Dorsolateral prefrontal cortex (tissue), 120 donors: ENCODE measurements at regions of chr20 and their contacts with region 1.

Region 1: DNA sequence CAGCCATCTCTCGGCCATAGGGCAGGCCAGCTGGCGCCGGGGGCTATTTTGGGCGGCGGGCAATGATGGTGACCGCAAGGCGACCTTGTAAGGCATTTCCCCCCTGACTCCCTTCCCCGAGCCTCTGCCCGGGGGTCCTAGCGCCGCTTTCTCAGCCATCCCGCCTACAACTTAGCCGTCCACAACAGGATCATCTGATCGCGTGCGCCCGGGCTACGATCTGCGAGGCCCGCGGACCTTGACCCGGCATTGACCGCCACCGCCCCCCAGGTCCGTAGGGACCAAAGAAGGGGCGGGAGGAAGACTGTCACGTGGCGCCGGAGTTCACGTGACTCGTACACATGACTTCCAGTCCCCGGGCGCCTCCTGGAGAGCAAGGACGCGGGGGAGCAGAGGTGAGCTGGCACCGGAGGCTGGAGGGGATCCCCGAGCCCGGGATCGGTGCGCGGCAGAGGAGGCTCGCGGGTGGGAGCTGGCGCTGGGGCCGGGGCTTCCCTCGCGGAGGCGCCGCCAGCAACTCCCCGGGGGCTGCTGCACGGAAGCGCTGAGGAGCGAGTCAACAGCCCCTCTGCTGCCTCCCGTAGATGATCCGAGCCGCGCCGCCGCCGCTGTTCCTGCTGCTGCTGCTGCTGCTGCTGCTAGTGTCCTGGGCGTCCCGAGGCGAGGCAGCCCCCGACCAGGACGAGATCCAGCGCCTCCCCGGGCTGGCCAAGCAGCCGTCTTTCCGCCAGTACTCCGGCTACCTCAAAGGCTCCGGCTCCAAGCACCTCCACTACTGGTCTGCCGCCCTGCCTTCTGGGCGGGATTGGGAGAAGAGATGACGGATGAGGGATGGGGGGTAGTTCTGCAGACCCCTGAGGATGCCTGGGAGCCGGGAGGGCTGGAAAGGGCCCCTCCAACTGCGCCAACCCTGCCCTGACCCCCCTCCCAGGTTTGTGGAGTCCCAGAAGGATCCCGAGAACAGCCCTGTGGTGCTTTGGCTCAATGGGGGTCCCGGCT is at the starts of genes CTSA and NEURL2:
- DNase-seq: peak; percentile 91 to 96 (median 94)
- H3K4me3 ChIP-seq: peak within 1 kb of the TSS; percentile 71 to 100 (median 92)
- H3K27ac ChIP-seq: peak within 1 kb of the TSS; percentile 51 to 98 (median 91)
- H3K27me3 ChIP-seq: no peaks in the 10 kb centered on the region
- CTCF ChIP-seq: peak in 47 of 56 donors; percentile 8 to 66 (median 39)
- total RNA-seq, gene CTSA: 72.5 to 172 (median 116) TPM
- total RNA-seq, gene NEURL2: 3.3 to 19.6 (median 7.1) TPM

Region 2: DNA sequence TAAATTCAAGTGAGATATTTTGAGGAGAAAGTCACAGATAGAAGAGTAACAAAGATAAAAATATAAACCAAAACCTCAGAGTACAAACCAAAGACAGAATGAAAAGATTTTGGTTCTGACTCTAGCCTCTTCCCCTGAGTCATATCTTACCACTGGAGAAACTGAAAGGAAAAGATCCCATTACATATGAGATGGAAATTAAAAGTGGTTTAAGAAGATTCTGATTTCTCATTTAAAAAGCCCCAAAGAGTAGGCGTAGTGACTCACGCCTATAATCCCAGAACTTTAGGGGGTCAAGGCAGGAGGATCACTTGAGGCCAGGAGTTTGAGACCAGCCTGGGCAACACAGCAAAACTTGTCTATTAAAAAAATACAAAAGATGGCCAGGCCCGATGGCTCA is 138.5 kb before region 1 on chr20:
- intact Hi-C with region 1: no loop called
- DNase-seq: no peak
- H3K4me3 ChIP-seq: no peak overlapping the region
- H3K27ac ChIP-seq: no peak overlapping the region
- H3K27me3 ChIP-seq: no peaks in the 10 kb centered on the region
- CTCF ChIP-seq: no peak

Region 3: DNA sequence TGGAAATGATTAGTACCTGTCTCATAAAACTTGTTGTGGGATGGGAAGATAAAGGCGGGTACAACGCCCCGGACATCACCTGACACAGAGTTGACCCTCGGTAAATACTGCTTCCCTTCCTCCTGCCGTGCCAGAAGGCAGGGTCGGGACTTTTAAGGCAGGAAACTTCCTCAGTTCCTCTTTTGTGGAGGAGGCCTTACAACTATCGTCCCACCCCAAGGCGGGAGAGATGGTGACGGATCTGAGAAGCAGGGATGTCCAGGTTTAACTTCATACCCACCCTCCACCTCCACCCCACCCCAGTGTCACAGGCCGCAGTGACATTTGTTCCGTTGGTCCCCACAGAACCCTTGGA is 99.0 kb before region 1 on chr20:
- intact Hi-C with region 1: loop called in 1 of 2 experiments (anchors 5 kb)
- DNase-seq: peak in 1 of 10 donors; percentile 4
- H3K4me3 ChIP-seq: peak overlapping the region; percentile 77 to 100 (median 96)
- H3K27ac ChIP-seq: peak overlapping the region in 53 of 59 donors; percentile 33 to 95 (median 86)
- H3K27me3 ChIP-seq: no peaks in the 10 kb centered on the region
- CTCF ChIP-seq: no peak

Region 4: DNA sequence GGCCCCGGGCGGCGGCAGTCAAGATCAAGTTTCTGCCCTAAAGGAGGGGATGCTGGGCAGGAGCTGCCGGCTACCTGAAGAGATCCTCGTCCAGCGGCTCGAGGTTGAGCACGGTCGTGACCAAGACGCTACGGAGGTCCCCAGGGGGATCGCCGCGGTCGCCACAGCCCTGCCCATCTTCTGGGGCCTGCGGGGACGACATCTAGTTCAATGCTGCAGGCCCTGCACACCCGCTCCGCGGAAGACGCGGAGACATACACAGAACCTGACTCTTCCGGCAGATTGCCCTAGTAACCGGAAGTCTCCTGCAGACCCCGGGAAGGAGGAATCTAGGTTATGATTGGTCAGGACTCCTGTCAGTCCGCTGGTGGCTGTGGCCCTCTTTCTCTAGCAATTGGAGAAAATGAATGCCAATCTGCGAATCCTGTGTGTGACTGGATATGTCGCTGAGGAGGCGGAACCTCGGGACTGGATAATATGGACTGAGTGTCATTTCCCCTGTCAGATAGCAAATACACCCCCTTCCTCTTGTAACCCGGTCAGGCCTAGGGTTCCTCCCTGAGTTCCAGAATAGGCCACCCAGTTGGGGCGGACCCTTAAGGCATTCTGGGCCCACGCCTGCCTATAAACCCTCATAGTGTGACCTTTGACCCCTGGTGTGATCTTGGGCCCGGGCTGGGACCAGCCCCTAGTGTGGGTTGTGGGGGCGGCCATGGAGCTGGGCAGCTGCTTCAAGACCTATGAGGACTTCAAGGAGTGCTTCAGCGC is 34.0 kb before region 1 on chr20 and contains the starts of genes ACOT8 and ZSWIM3:
- intact Hi-C with region 1: loop called in 1 of 2 experiments (anchors 5 kb)
- DNase-seq: peak; percentile 75 to 98 (median 95)
- H3K4me3 ChIP-seq: peak within 1 kb of the TSS; percentile 68 to 100 (median 93)
- H3K27ac ChIP-seq: peak within 1 kb of the TSS in 58 of 59 donors; percentile 42 to 96 (median 85)
- H3K27me3 ChIP-seq: no peaks in the 10 kb centered on the region
- CTCF ChIP-seq: peak in 8 of 56 donors; percentile 5 to 35 (median 18)
- total RNA-seq, gene ACOT8: 27.3 to 54.9 (median 41.6) TPM
- total RNA-seq, gene ZSWIM3: 2.8 to 9.6 (median 6.0) TPM

Region 5: DNA sequence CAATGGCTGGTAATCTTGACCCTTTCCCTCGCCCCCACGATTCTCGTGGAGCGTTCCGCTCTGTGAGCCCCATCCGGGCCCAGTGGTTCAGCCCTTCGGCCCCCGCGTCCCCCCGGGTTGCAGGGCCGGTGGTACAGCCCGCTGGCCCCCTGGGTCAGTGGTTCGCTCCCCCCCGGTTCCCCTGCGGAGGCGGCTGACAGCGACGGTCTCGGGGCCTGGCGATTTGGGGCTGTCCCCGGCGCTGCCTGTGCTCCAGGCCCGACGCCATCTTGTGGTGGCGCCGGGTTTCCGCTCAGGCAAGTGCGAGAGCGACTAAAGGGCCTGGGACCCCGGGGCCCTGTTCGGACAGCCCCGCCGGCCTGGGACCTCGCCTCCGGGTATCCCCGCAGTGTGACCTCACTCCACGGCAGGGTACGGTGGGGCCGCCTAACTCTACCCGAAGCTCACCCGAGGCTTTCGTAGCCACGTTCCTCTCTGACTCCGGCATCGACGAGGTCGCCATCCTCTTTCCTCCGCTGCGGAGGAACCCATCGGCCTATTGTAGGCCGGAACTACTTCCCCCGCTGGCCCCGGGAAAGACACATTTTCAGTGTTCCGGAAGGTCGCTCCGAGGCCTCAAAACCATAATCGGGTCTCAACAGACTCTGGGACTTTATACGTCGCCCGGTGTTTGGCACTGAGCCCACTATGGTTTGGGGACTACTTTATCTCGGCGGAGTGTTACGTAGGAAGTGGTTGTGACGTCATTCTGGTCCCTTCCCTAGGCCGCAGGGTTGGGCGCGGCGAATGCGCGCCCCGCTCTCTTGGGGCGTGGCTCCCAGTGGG is 80.6 kb after region 1 on chr20 and contains the start of gene ZNF335:
- intact Hi-C with region 1: loop called in 1 of 2 experiments (anchors 5 kb)
- DNase-seq: peak; percentile 88 to 97 (median 94)
- H3K4me3 ChIP-seq: peak within 1 kb of the TSS; percentile 63 to 100 (median 90)
- H3K27ac ChIP-seq: peak within 1 kb of the TSS; percentile 97 to 100 (median 100)
- H3K27me3 ChIP-seq: no peaks in the 10 kb centered on the region
- CTCF ChIP-seq: peak in 53 of 56 donors; percentile 15 to 73 (median 54)
- total RNA-seq, gene ZNF335: 20.9 to 40.0 (median 26.7) TPM

Region 6: DNA sequence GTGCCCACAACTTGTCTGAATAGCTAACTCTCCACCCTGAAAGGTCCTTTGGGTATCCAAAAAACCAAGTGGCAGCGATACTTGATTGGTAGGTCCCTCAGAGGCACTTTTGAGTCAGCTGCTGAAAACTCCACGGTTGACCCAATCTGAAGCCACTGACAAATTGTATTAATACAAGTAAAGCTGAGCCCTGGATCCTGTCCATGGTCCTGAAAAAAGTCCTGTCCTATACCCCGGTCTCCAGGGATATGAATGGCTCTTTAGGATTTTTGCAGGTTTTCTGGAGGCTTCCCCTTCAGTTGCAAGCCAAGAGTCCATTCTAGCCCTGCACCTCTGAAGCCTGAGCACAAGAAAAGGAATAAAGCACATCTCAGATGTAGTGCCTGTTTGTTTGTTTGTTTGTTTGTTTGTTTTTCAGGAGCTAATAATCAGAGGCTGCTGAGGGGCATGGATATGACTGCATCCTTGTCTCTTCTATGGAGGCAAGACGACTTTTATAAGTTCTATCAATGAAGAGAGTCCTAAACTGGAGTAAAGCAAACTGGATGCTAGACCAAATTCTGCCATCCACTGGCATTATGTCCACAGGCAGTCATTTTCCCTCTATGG is 136.1 kb after region 1 on chr20:
- intact Hi-C with region 1: no loop called
- DNase-seq: no peak
- H3K4me3 ChIP-seq: no peak overlapping the region
- H3K27ac ChIP-seq: peak overlapping the region in 3 of 59 donors; percentile 14 to 94 (median 88)
- H3K27me3 ChIP-seq: peaks cover 0 to 63% (median 28%) of the 10 kb centered on the region in 45 donors
- CTCF ChIP-seq: no peak